HCT116 (cell line): ENCODE measurements at regions of chr12 and their contacts with region 1.

Region 1: DNA sequence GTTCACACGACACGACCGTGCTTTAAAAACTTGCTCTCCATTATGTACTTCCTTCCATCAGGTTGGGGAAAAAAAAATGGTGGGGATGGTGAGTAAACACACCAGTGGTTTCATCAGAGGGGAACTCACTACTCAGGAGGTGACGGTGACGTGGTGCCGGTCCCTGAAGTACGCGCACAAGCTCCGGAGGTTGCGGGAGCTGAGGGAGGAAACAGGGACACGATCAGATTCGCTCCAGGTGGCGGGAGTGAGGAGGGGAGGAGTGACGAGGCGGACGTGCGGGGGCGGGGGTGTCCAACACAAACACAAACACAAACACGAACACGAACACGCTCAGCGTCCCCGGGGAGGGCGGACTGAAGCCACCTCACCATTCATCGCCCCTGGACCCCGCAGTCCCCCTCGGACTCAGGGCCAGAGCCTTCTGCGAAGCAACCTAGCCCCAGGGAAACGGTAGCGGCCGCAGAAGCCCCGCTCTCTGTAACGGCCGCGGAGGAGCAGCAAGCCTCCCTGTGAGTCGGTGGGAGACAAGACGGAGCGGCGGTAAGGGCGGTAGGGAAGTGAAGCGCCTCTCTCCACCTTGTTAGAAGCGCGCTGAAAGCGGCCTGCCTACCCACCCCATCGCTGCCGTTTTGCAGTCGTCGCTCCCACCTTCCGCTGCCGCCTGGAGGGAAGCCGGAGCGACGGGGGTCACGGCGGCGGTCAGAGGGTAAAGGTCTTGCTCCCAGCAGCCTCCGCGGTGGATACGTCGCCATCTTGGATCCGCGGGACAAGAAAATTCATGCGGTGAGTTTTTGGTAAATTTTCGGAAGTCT is at the start of gene CNOT2:
- DNase-seq: peak; percentile 86
- ATAC-seq: peak; percentile 84
- H3K4me3 ChIP-seq: peak within 1 kb of the TSS; percentile 78 to 81
- H3K27ac ChIP-seq: peak within 1 kb of the TSS; percentile 96
- H3K4me1 ChIP-seq: peaks cover 3 to 16% of the 10 kb centered on the region in 2 experiments; a peak in 3 of 4 replicates
- H3K27me3 ChIP-seq: no peaks in the 10 kb centered on the region
- CTCF ChIP-seq: no peak
- POLR2A ChIP-seq: peak; percentile 39
- RAD21 ChIP-seq: no peak
- total RNA-seq, gene CNOT2: 58.7 TPM

Region 2: DNA sequence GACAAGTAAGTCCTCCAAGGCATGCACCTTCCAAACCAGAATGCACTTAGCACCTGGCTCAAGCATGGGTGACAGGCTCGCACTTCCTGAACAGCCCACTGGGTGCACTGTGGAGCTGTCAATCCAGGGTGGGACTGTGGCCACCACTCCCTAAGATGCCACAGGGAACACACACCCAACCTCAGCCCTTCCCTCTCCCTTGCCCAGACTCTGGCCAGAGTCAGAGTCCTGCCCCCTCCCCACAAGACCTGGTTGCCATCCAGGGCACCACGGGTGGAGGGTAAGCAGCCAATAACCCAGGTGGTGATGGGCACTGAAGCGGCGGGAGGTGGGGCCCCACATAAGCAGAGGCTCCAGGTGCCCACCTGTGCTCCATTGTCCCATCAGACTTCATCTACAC is 257.2 kb before region 1 on chr12:
- CTCF ChIA-PET with region 1: no interaction called
- POLR2A ChIA-PET with region 1: no interaction called
- RAD21 ChIA-PET with region 1: no interaction called
- intact Hi-C with region 1: loop called (anchors 2 kb)
- DNase-seq: peak; percentile 54
- ATAC-seq: peak; percentile 98
- H3K4me3 ChIP-seq: no peak overlapping the region
- H3K27ac ChIP-seq: no peak overlapping the region
- H3K4me1 ChIP-seq: peaks cover 12 to 24% of the 10 kb centered on the region in 2 experiments
- H3K27me3 ChIP-seq: no peaks in the 10 kb centered on the region
- CTCF ChIP-seq: peak; percentile 16 to 90 (median 81); a peak in 4 of 6 replicates
- POLR2A ChIP-seq: no peak
- RAD21 ChIP-seq: peak; percentile 79

Region 3: DNA sequence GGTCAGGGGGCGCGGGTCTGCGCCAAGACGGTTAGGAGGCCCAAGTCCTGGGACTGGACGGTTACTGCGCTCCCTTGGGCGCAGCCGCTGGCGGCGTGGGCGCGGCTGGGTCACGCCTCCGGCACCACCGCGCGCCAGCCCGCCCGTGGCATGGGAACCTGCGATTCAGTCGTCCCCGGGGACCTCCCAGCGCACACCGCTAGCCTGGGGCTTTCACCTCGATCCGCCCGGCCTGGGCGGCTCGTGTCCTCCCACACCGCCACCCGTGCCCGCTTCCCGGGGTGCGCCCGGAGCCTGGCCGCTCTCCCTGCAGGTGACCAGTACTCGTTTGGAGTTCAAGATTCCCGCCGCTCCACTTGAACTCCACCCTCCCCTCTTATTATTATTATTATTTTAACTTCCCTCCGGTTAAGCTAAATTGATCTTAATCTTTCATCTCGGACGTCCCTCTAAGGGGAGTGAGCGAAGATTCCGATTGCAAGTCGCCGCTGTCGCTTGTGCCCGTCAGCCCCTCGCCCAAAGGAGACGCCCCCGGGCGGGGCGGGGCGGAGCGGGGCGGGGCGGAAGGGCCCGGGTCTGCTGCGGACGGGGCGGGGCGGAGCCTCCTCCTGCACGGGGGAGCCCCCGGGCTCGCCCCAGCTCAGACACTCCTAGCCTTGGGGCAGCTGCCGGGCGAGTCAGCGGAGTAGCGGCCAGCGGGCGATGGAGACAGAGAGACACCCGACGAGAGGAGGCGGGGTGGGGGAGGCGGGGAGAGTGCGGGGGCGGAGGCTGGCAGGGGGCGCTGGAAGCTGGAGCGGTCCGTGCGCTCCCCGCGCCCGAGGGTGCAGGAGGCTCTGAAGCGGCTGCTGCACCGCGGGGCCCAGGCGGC is 123.0 kb after region 1 on chr12 and contains the start of gene KCNMB4:
- CTCF ChIA-PET with region 1: no interaction called
- POLR2A ChIA-PET with region 1: no interaction called
- RAD21 ChIA-PET with region 1: no interaction called
- intact Hi-C with region 1: loop called (anchors 5 kb)
- DNase-seq: no peak
- ATAC-seq: peak; percentile 76
- H3K4me3 ChIP-seq: peak within 1 kb of the TSS; percentile 61 to 76
- H3K27ac ChIP-seq: peak within 1 kb of the TSS; percentile 76
- H3K4me1 ChIP-seq: peaks cover 0 to 17% of the 10 kb centered on the region in 2 experiments; a peak in 3 of 4 replicates
- H3K27me3 ChIP-seq: no peaks in the 10 kb centered on the region
- CTCF ChIP-seq: no peak
- POLR2A ChIP-seq: peak; percentile 6
- RAD21 ChIP-seq: no peak
- total RNA-seq, gene KCNMB4: 5.0 TPM

Region 4: GRCh38 chr12:70576346-70577282 is 333.7 kb after region 1 on chr12:
- CTCF ChIA-PET with region 1: interaction called, 3 read pairs
- POLR2A ChIA-PET with region 1: no interaction called
- RAD21 ChIA-PET with region 1: no interaction called
- intact Hi-C with region 1: loop called (anchors 5 kb)
- DNase-seq: peak; percentile 66
- ATAC-seq: peak; percentile 90
- H3K4me3 ChIP-seq: no peak overlapping the region
- H3K27ac ChIP-seq: no peak overlapping the region
- H3K4me1 ChIP-seq: no peaks in the 10 kb centered on the region
- H3K27me3 ChIP-seq: no peaks in the 10 kb centered on the region
- CTCF ChIP-seq: peak; percentile 65 to 91 (median 87)
- POLR2A ChIP-seq: no peak
- RAD21 ChIP-seq: peak; percentile 97

Region 5: GRCh38 chr12:71029302-71029701 is 786.4 kb after region 1 on chr12:
- CTCF ChIA-PET with region 1: no interaction called
- POLR2A ChIA-PET with region 1: no interaction called
- RAD21 ChIA-PET with region 1: no interaction called
- intact Hi-C with region 1: no loop called
- DNase-seq: no peak
- ATAC-seq: no peak
- H3K4me3 ChIP-seq: no peak overlapping the region
- H3K27ac ChIP-seq: no peak overlapping the region
- H3K4me1 ChIP-seq: no peaks in the 10 kb centered on the region
- H3K27me3 ChIP-seq: no peaks in the 10 kb centered on the region
- CTCF ChIP-seq: no peak
- POLR2A ChIP-seq: no peak
- RAD21 ChIP-seq: no peak